ENCODE measurements at regions of chr3 and their contacts with region 1.

Region 1: GRCh38 chr3:100316641-100317069 is 17.9 kb upstream of the NIT2 start:
- DNase-seq: peak; percentile 77
- ATAC-seq: peak; percentile 80
- H3K4me3 ChIP-seq: no peak overlapping the region
- H3K27ac ChIP-seq: no peak overlapping the region
- H3K4me1 ChIP-seq: no peaks in the 10 kb centered on the region; the same call in 1 of the 2 replicates
- H3K27me3 ChIP-seq: no peaks in the 10 kb centered on the region
- CTCF ChIP-seq: peak; percentile 75

Region 2: DNA sequence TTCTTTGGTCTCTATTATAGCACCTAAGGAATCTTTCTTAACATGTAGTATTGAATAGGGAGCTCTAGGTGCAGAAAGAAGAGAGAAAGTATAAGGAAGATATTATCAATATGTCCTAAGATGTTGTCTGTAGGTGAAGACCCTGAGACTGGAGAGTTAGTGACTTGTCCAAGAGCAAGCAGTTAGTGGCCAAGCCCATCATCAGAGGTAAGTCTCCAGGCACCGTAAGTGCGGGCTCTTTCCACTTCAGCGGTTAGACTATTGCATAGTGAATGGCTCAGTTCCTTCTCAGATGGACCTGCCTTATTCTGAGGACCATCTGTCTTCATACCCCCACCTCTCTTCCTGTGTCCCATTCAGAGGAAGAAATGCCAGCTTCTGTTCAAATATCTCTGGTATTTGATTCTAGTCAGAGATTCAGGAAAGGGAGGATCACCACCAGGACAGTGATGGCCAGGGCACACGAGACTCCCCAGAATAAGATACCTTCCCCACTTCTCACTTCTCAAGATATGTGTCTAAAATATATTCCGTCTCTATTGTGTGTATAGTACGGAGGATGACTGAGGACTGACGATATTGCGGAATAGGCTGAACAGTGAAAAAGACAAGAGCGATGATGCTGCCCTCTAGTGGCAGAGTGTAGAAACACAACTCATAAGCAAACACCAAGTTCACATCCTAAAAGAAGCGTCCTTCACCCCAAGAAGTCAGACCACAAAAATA is 273.6 kb after region 1 on chr3:
- CTCF ChIA-PET with region 1: no interaction called
- POLR2A ChIA-PET with region 1: no interaction called
- intact Hi-C with region 1: loop called (anchors 1 kb)
- DNase-seq: peak; percentile 87
- ATAC-seq: peak; percentile 82
- H3K4me3 ChIP-seq: 0 out of 2 replicates have a peak overlapping the region, but pooled peaks have one; percentile 24
- H3K27ac ChIP-seq: no peak overlapping the region
- H3K4me1 ChIP-seq: peaks cover 19% of the 10 kb centered on the region
- H3K27me3 ChIP-seq: no peaks in the 10 kb centered on the region
- CTCF ChIP-seq: peak; percentile 96

Region 3: GRCh38 chr3:100634493-100635272 is 318.0 kb after region 1 on chr3:
- CTCF ChIA-PET with region 1: no interaction called
- POLR2A ChIA-PET with region 1: no interaction called
- intact Hi-C with region 1: loop called (anchors 10 kb)
- DNase-seq: peak; percentile 62
- ATAC-seq: peak; percentile 78
- H3K4me3 ChIP-seq: no peak overlapping the region
- H3K27ac ChIP-seq: no peak overlapping the region
- H3K4me1 ChIP-seq: peaks cover 12% of the 10 kb centered on the region
- H3K27me3 ChIP-seq: no peaks in the 10 kb centered on the region
- CTCF ChIP-seq: peak; percentile 52

Region 4: DNA sequence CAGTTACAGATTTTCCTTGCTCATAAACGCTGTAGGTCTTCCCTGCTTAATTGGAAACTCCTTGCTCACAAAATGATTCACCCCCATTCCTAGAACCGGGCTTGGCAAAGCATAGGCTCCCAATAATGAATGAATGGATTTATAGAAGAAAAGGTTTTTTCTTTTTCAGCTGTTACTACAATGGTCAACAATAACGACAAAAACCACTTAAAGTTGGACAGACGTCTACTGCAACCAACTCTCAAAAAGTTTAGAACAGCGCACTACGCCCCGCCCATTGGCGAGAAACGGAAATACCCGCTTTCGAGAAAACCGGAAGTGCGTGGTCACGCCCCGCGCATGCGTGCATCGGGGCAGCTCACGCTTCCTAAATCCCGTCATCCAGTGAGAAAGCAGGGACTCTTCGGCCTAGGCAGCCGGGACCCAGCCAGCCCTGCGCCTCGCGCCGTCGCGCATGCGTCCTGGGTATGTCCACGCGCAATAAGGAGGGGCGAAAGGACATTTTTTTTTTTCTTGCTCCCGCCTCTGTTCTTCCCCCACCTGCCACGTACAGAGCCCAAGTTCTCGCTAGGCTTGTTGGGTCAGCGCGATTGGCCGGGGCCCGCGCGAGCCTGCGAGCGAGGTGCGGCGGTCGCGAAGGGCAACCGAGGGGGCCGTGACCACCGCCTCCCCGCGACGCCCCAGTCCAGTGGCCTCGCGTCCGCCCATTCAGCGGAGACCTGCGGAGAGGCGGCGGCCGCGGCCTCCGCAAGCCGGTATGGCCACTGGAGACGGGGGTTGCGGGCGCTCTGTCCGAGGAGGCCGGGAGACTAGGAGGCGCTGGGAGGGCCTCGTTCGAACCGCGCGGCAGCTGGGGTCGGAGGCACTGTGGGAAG is 392.5 kb after region 1 on chr3 and contains the start of gene TFG:
- CTCF ChIA-PET with region 1: no interaction called
- POLR2A ChIA-PET with region 1: no interaction called
- intact Hi-C with region 1: loop called (anchors 10 kb)
- DNase-seq: peak; percentile 100
- ATAC-seq: peak; percentile 89
- H3K4me3 ChIP-seq: peak within 1 kb of the TSS; percentile 80
- H3K27ac ChIP-seq: peak within 1 kb of the TSS; percentile 93
- H3K4me1 ChIP-seq: peaks cover 21% of the 10 kb centered on the region
- H3K27me3 ChIP-seq: no peaks in the 10 kb centered on the region
- CTCF ChIP-seq: no peak
- total RNA-seq, gene TFG: 97.9 and 106 TPM in 2 replicates